Activated CD4-positive, alpha-beta T cell treated with anti-CD3 and anti-CD28 coated beads, Interleukin-2, amount 10 ng/mL, durations not matched to agents 7 days and 5 days (primary cell): ENCODE measurements at regions of chr6 and their contacts with region 1.

Region 1: DNA sequence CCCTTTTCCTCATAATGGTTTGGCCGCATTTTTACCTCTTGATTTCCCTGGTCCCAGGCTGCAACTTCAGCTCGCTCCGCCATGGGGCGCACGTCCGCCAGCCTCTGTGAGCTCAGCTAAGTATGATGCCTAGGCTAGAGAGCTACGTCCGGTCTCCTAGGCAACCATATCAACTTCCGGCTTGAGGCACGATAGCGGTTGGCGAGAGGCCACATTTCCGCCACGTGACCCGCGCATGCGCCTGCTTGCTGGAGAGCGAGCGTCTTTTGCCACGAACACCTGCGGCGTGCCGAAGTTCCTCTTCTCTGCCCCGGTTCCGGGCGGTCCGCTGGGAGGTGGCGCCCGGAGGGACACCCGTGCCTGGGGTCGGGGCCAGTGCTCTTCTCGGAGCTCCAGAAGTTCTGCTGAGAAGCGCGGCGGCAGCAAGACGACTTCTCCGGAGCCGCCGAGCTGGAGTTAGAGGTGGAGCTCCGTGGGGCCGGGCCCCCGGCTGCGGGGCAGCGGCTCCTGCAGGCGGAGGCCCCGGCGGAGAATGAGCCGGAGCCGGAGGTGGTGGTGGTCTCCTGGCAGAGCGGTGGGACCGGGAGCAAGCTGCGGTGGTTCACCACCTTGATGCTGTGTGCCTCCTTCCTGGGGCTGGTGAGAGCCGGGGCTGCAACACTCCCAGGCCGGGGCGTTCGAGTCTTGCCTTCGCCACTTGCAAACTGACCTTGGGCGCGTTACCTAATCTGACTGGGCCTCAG is 172.0 kb downstream of the SLC16A10 start:
- DNase-seq: peak; percentile 99
- H3K4me3 Mint-ChIP-seq: peak overlapping the region; percentile 68
- H3K27ac Mint-ChIP-seq: peak overlapping the region; percentile 87
- H3K4me1 Mint-ChIP-seq: peaks cover 33% of the 10 kb centered on the region
- H3K27me3 Mint-ChIP-seq: peaks cover 4% of the 10 kb centered on the region

Region 2: DNA sequence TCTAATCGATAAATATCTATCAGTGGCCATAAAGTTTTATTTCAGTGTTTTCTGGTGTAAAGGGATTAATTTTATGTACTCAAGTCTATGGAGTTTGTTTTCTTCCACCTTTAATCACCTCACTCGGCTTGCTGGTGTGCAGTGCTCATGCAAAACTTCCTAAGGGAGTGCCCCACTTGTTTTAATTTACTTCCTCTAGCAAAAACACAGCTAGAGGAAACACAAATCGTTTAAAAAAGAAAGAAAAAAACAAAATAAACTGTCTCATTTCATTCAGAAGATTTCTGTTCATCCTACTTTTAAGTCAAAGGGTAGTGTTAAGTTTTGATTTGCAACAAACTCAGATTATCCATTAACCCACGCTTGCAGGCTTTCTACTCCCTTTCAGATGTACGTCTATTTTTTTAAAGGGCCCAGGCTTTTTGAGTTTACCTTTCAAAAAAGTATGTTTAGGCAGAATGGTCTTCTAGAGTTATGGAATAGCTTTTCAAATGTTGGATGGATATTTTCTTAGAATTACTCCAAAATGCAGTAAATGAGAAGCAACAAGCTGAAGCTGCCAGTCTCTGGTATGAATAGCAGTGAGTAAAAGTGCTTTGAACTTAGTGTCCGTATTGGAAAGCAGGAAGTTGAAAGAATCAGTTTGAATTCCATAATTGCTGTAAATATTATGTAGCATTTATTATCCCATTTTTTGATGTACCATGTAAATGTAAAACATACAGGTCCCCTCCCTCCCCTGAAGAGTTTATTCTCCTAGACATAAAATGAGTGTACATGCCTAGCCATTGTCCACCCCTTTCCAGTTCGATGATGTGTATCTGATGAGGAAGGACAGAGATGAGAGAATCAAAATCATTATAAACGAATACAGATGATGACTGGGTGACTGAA is 58.7 kb before region 1 on chr6:
- CTCF ChIA-PET with region 1: no interaction called
- POLR2A ChIA-PET with region 1: no interaction called
- DNase-seq: no peak
- H3K4me3 Mint-ChIP-seq: no peak overlapping the region
- H3K27ac Mint-ChIP-seq: no peak overlapping the region
- H3K4me1 Mint-ChIP-seq: peaks cover 15% of the 10 kb centered on the region
- H3K27me3 Mint-ChIP-seq: no peaks in the 10 kb centered on the region

Region 3: GRCh38 chr6:111242452-111242851 is 16.8 kb before region 1 on chr6:
- CTCF ChIA-PET with region 1: interaction called, 10 read pairs
- POLR2A ChIA-PET with region 1: no interaction called
- DNase-seq: no peak
- H3K4me3 Mint-ChIP-seq: no peak overlapping the region
- H3K27ac Mint-ChIP-seq: no peak overlapping the region
- H3K4me1 Mint-ChIP-seq: no peaks in the 10 kb centered on the region
- H3K27me3 Mint-ChIP-seq: peaks cover 3% of the 10 kb centered on the region

Region 4: GRCh38 chr6:111353912-111354462 is 94.7 kb after region 1 on chr6:
- CTCF ChIA-PET with region 1: no interaction called
- POLR2A ChIA-PET with region 1: no interaction called
- DNase-seq: no peak
- H3K4me3 Mint-ChIP-seq: no peak overlapping the region
- H3K27ac Mint-ChIP-seq: no peak overlapping the region
- H3K4me1 Mint-ChIP-seq: no peaks in the 10 kb centered on the region
- H3K27me3 Mint-ChIP-seq: no peaks in the 10 kb centered on the region

Region 5: GRCh38 chr6:111478749-111479148 is 219.5 kb after region 1 on chr6:
- CTCF ChIA-PET with region 1: interaction called, 27 read pairs
- POLR2A ChIA-PET with region 1: interaction called, 4 read pairs
- DNase-seq: no peak
- H3K4me3 Mint-ChIP-seq: no peak overlapping the region
- H3K27ac Mint-ChIP-seq: no peak overlapping the region
- H3K4me1 Mint-ChIP-seq: peaks cover 38% of the 10 kb centered on the region
- H3K27me3 Mint-ChIP-seq: no peaks in the 10 kb centered on the region

Region 6: GRCh38 chr6:111605100-111605751 is 346.0 kb after region 1 on chr6:
- CTCF ChIA-PET with region 1: interaction called, 10 read pairs
- POLR2A ChIA-PET with region 1: no interaction called
- DNase-seq: peak; percentile 43
- H3K4me3 Mint-ChIP-seq: peak overlapping the region; percentile 89
- H3K27ac Mint-ChIP-seq: peak overlapping the region; percentile 92
- H3K4me1 Mint-ChIP-seq: peaks cover 47% of the 10 kb centered on the region
- H3K27me3 Mint-ChIP-seq: no peaks in the 10 kb centered on the region

Region 7: DNA sequence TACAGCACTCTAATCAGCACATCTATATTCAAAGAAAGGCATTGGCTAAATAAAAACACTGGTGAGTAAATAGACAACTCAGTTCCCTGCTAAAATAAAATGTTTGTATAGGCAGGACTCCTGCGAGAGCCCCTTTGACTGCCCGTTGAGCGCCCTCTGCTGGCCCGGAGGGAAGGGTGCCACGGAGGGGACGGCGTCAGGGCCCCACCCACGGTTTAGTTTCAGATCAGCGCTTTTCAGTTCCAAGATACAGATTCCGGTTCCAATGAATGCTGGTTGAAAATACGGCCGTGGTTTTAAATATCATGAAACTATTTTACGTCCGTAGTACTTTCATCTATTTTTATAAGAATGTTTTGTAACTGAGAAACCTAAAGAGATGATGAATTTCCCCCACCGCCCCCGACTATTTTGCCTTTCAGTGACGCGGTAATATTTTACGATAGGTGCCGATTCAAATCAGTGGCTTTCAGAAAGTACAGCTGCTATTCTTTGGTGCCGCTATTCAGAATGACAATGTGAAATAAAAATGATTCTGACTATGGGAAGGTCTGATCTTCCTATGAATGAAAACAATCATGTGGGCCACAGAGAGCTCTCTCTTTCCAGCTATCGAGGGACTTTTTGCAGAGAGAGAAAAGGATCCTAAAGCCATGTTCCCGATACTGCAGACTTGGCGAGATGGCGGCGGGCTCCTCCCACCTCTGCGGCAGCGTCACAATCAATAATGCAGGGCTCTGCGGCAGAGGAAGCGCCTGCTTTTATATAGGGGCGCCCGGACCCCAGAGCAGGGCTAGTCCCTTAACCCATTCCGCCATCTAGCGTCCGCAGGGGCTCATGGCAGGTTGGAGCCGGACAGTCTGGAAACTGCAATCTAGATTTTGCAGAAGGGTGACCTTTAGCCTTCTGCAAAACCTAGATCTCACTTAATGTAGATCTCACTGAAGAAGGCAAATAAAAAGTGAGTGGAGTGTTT is 784.1 kb after region 1 on chr6:
- CTCF ChIA-PET with region 1: interaction called, 10 read pairs
- POLR2A ChIA-PET with region 1: no interaction called
- DNase-seq: peak; percentile 94
- H3K4me3 Mint-ChIP-seq: peak overlapping the region; percentile 96
- H3K27ac Mint-ChIP-seq: peak overlapping the region; percentile 97
- H3K4me1 Mint-ChIP-seq: peaks cover 22% of the 10 kb centered on the region
- H3K27me3 Mint-ChIP-seq: no peaks in the 10 kb centered on the region